Vagina (tissue), 2 donors: ENCODE measurements at regions of chr12 and their contacts with region 1.

Region 1: GRCh38 chr12:13085968-13086686 is 17.3 kb downstream of the GSG1 start:
- DNase-seq: no peak
- H3K4me3 ChIP-seq: no peak overlapping the region
- H3K27ac ChIP-seq: no peak overlapping the region
- H3K4me1 ChIP-seq: peaks cover 7% of the 10 kb centered on the region
- H3K27me3 ChIP-seq: no peaks in the 10 kb centered on the region
- CTCF ChIP-seq: no peak
- POLR2A ChIP-seq: no peak

Region 2: GRCh38 chr12:13124661-13125505 is 38.8 kb after region 1 on chr12:
- intact Hi-C with region 1: loop called (anchors 1 kb)
- DNase-seq: no peak
- H3K4me3 ChIP-seq: no peak overlapping the region
- H3K27ac ChIP-seq: no peak overlapping the region
- H3K4me1 ChIP-seq: no peaks in the 10 kb centered on the region
- H3K27me3 ChIP-seq: no peaks in the 10 kb centered on the region
- CTCF ChIP-seq: no peak
- POLR2A ChIP-seq: no peak